ENCODE measurements at regions of chr10 and their contacts with region 1.

Region 1: GRCh38 chr10:47165711-47166524 is 134.1 kb upstream of the GDF10 start:
- DNase-seq: peak in 1 of 2 experiments; percentile 60
- H3K4me3 ChIP-seq: no peak overlapping the region
- H3K27ac ChIP-seq: no peak overlapping the region
- H3K4me1 ChIP-seq: peaks cover 47% of the 10 kb centered on the region
- H3K27me3 ChIP-seq: no peaks in the 10 kb centered on the region
- CTCF ChIP-seq: no peak

Region 2: GRCh38 chr10:47047671-47048525 is 118.0 kb before region 1 on chr10:
- CTCF ChIA-PET with region 1: interaction called, 3 read pairs
- POLR2A ChIA-PET with region 1: no interaction called
- intact Hi-C with region 1: loop called (anchors 10 kb)
- DNase-seq: peak in 1 of 2 experiments; percentile 84
- H3K4me3 ChIP-seq: no peak overlapping the region
- H3K27ac ChIP-seq: no peak overlapping the region
- H3K4me1 ChIP-seq: no peaks in the 10 kb centered on the region
- H3K27me3 ChIP-seq: no peaks in the 10 kb centered on the region
- CTCF ChIP-seq: peak; percentile 97

Region 3: DNA sequence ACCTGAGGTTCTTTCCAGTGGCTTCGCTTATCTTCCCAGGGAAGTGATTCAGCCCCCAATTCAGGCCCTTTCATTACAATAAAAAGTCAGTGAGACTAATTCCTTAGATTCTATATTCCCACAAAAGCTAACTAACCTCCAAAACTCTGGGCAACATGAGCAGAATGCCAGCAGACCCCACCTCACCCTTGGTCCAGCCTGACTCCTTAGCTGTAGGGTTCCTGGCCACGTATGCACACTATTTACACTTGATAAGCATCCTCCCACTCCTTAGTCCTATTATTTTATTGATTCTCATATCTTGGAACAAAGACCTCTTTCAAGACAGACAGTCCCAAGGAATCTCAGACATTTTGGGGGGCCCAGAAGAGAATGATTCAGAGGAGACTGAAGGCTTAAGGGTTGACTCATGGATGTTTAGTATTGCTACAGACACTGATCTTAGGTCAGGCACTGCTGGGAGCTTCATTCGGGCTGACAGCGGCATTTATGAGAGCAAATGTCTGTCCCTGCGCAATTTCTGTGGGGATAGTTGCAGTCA is 28.5 kb before region 1 on chr10:
- CTCF ChIA-PET with region 1: no interaction called
- POLR2A ChIA-PET with region 1: no interaction called
- intact Hi-C with region 1: loop called (anchors 2 kb)
- DNase-seq: peak; percentile 19 to 88
- H3K4me3 ChIP-seq: peak overlapping the region; percentile 40; the same call in 1 of the 2 replicates
- H3K27ac ChIP-seq: peak overlapping the region; percentile 53
- H3K4me1 ChIP-seq: peaks cover 41% of the 10 kb centered on the region
- H3K27me3 ChIP-seq: no peaks in the 10 kb centered on the region
- CTCF ChIP-seq: no peak

Region 4: GRCh38 chr10:47241696-47242496 is 76.0 kb after region 1 on chr10:
- CTCF ChIA-PET with region 1: no interaction called
- POLR2A ChIA-PET with region 1: interaction called, 13 read pairs
- intact Hi-C with region 1: no loop called
- DNase-seq: peak in 1 of 2 experiments; percentile 8
- H3K4me3 ChIP-seq: no peak overlapping the region
- H3K27ac ChIP-seq: no peak overlapping the region
- H3K4me1 ChIP-seq: no peaks in the 10 kb centered on the region
- H3K27me3 ChIP-seq: no peaks in the 10 kb centered on the region; the same call in 1 of the 2 replicates
- CTCF ChIP-seq: no peak

Region 5: DNA sequence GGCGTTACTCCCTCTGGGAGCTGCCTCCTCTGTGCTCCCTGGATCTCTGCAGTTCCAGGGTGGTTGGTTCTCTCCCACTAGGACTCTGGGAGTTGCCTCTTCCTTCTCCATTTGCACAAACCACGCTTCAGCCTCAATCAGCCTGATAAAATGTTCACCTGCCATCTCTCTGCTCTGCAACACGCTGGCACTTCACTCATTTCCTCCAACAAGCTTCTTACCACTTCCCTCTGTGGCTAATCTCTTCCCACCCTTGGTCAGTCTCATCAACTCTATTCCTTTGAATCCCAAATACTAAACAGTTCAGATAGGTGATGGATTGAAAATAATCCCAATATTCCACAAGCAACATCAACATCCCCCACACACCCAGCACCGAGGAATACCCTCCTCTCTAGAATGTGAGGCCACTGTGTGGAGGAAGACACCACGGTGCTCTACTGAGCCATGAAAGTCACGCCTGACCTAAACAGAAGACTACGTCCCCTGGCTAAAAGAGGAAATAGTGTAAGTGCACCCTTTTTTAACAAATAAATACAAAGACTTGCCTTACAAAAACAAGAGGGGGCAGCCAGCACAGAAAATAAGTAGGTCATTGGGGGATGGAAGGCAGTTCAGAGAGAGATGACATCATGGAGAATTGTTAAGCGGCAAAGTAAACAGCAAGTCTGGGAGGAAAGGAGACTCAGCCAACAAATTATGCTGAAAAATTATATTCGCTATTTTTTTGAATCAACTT is 1969.8 kb after region 1 on chr10:
- CTCF ChIA-PET with region 1: no interaction called
- POLR2A ChIA-PET with region 1: no interaction called
- intact Hi-C with region 1: no loop called
- DNase-seq: no peak
- H3K4me3 ChIP-seq: no peak overlapping the region
- H3K27ac ChIP-seq: no peak overlapping the region
- H3K4me1 ChIP-seq: no peaks in the 10 kb centered on the region
- H3K27me3 ChIP-seq: peaks cover 49% of the 10 kb centered on the region
- CTCF ChIP-seq: no peak